ENCODE measurements at regions of chr5 and their contacts with region 1.

Region 1: DNA sequence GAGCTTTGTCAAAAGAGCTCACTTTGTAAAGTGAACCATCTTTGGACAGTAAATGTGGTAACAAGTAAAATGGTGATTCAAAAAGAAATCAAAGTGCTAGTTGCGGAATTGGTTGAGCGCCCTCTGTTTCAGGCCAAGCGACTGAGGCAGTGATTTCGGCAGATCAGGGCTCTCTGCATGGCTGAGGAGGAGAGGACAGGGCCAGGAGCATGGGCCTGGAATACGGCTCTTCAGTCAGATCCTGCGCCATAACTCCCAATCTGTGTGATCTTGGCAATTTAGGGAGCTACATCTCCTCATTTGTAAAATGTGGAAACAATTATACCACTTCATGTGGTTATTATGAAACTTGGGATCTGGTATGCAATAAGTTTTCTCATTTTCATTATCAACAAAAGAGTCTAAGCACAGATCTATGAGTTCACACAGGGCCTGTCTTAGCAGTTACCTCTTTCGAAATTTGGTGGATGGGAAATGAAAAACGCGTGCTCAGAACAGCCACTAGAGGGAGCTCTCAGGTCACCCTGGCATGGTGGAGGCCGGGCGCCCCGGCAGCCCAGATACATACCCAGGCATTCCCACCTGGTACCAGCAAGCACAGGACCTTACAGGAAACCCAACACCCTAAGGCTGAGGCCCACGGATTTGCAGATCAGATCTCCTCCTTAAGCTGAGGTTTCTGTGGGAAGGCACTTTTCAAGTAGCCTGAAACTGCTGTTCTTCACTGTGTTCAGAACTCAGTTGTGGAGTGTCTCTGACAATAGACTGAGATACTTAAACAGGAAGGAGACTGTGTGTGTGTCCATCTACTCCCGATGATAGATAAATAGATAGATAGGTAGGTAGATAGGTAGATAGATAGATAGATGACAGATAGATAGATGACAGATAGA is 303.7 kb downstream of the RAB3C start:
- DNase-seq: peak; percentile 41 to 77 (median 66)
- ATAC-seq: peak; percentile 91
- H3K4me3 ChIP-seq: no peak overlapping the region
- H3K4me3 Mint-ChIP-seq: peak overlapping the region in 7 of 10 donors; percentile 0 to 67 (median 38)
- H3K27ac ChIP-seq: no peak overlapping the region
- H3K27ac Mint-ChIP-seq: peak overlapping the region in 8 of 9 donors; percentile 13 to 85 (median 49)
- H3K4me1 ChIP-seq: peaks cover 0 to 10% of the 10 kb centered on the region in 2 donors
- H3K4me1 Mint-ChIP-seq: peaks cover 19 to 38% (median 27%) of the 10 kb centered on the region in 7 donors
- H3K27me3 ChIP-seq: no peaks in the 10 kb centered on the region
- H3K27me3 Mint-ChIP-seq: peaks cover 0 to 12% (median 0%) of the 10 kb centered on the region in 5 donors

Region 2: DNA sequence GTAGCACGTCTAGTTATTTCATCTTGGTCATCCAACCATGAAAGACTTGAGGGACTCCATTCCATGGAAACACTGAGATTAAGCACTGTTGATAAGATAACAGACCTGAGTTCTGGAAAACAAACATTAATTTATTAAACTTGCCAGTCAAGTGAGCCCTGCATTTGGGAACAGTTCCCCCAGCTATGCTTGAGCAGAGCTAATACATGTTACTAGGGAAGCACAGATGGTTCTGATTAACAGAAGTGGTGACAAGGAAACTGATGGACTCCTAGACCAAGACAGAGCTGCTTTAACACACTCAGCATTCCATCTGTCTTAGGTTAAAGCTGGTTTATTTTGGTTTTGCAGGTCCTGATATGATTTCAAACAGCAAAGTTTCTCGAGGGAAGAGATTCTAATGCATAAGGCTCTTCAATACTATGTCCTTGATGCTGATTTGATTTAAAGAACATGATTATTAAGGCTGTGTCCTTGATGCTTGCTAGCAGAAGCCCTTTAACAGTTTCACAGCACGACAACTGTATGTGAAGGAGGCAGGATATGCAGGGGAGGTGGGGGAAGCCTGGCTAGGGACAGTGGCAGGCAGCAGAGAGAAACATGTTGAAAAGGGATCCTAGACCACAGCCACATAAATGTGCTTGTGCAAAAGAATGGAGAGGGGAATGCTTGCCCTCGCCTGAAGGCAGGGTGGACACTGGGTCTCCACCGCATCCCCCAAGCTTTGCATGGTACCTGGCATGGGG is 1470.1 kb before region 1 on chr5:
- CTCF ChIA-PET with region 1: no interaction called
- POLR2A ChIA-PET with region 1: no interaction called
- intact Hi-C with region 1: no loop called
- DNase-seq: no peak
- ATAC-seq: no peak
- H3K4me3 ChIP-seq: no peak overlapping the region
- H3K4me3 Mint-ChIP-seq: no peak overlapping the region
- H3K27ac ChIP-seq: no peak overlapping the region
- H3K27ac Mint-ChIP-seq: peak overlapping the region in 1 of 9 donors; percentile 26
- H3K4me1 ChIP-seq: no peaks in the 10 kb centered on the region
- H3K4me1 Mint-ChIP-seq: no peaks in the 10 kb centered on the region
- H3K27me3 ChIP-seq: no peaks in the 10 kb centered on the region
- H3K27me3 Mint-ChIP-seq: peaks cover 0 to 7% (median 4%) of the 10 kb centered on the region in 5 donors

Region 3: GRCh38 chr5:58871648-58872242 is 14.8 kb before region 1 on chr5:
- CTCF ChIA-PET with region 1: interaction called, 12 read pairs
- POLR2A ChIA-PET with region 1: no interaction called
- intact Hi-C with region 1: no loop called
- DNase-seq: peak in 4 of 9 donors; percentile 27 to 30 (median 28)
- ATAC-seq: peak; percentile 53
- H3K4me3 ChIP-seq: no peak overlapping the region
- H3K4me3 Mint-ChIP-seq: no peak overlapping the region
- H3K27ac ChIP-seq: no peak overlapping the region
- H3K27ac Mint-ChIP-seq: no peak overlapping the region
- H3K4me1 ChIP-seq: no peaks in the 10 kb centered on the region
- H3K4me1 Mint-ChIP-seq: peaks cover 0 to 1% (median 0%) of the 10 kb centered on the region in 7 donors
- H3K27me3 ChIP-seq: peaks cover 0 to 4% of the 10 kb centered on the region in 2 donors
- H3K27me3 Mint-ChIP-seq: peaks cover 10 to 41% (median 16%) of the 10 kb centered on the region in 5 donors

Region 4: GRCh38 chr5:59086024-59086423 is 199.5 kb after region 1 on chr5:
- CTCF ChIA-PET with region 1: no interaction called
- POLR2A ChIA-PET with region 1: no interaction called
- intact Hi-C with region 1: loop called in 1 of 2 experiments (anchors 5 kb)
- DNase-seq: peak in 1 of 9 donors; percentile 17
- ATAC-seq: no peak
- H3K4me3 ChIP-seq: no peak overlapping the region
- H3K4me3 Mint-ChIP-seq: no peak overlapping the region
- H3K27ac ChIP-seq: no peak overlapping the region
- H3K27ac Mint-ChIP-seq: peak overlapping the region in 2 of 9 donors; percentile 0 to 27
- H3K4me1 ChIP-seq: no peaks in the 10 kb centered on the region
- H3K4me1 Mint-ChIP-seq: peaks cover 0 to 17% (median 0%) of the 10 kb centered on the region in 7 donors
- H3K27me3 ChIP-seq: peaks cover 0 to 3% of the 10 kb centered on the region in 2 donors
- H3K27me3 Mint-ChIP-seq: peaks cover 0 to 33% (median 0%) of the 10 kb centered on the region in 5 donors

Region 5: GRCh38 chr5:59174248-59174844 is 287.8 kb after region 1 on chr5:
- CTCF ChIA-PET with region 1: interaction called, 73 read pairs
- POLR2A ChIA-PET with region 1: interaction called, 3 read pairs
- intact Hi-C with region 1: loop called (anchors 1 kb)
- DNase-seq: peak in 7 of 9 donors; percentile 35 to 67 (median 54)
- ATAC-seq: peak; percentile 86
- H3K4me3 ChIP-seq: no peak overlapping the region
- H3K4me3 Mint-ChIP-seq: no peak overlapping the region
- H3K27ac ChIP-seq: no peak overlapping the region
- H3K27ac Mint-ChIP-seq: peak overlapping the region in 1 of 9 donors; percentile 5
- H3K4me1 ChIP-seq: no peaks in the 10 kb centered on the region
- H3K4me1 Mint-ChIP-seq: peaks cover 0 to 48% (median 5%) of the 10 kb centered on the region in 7 donors
- H3K27me3 ChIP-seq: no peaks in the 10 kb centered on the region
- H3K27me3 Mint-ChIP-seq: no peaks in the 10 kb centered on the region

Region 6: DNA sequence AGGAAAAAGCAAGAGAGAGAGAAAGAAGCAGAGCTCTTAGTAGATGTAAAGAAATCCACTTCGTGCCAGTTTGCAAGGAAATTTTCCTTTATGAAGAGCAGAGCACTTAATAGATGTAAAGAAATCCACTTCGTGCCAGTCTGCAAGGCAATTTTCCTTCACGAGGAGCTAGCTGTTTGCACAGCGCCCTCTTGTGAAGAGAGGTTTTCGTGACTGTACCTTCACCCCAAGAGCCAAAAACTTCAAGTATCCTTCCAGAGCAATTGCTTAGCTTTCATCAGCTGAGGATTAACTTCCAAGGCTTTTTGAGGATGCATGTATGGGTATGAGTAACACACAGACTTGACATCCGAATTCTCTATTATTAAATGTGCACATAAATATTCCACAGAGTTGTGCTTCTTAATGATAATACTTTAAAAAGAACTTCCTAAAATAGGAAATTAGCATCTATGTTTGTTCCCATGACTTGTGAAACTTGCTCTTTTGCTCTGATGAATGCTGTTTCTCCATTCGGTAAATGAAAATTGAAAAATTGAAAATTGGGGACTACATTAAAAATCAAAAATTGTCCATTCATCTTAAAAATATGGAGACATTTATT is 481.3 kb after region 1 on chr5:
- CTCF ChIA-PET with region 1: interaction called, 5 read pairs
- POLR2A ChIA-PET with region 1: no interaction called
- intact Hi-C with region 1: loop called (anchors 1 to 2 kb)
- DNase-seq: peak in 8 of 9 donors; percentile 1 to 47 (median 30)
- ATAC-seq: peak; percentile 60
- H3K4me3 ChIP-seq: no peak overlapping the region
- H3K4me3 Mint-ChIP-seq: peak overlapping the region in 1 of 10 donors; percentile 24
- H3K27ac ChIP-seq: no peak overlapping the region
- H3K27ac Mint-ChIP-seq: no peak overlapping the region
- H3K4me1 ChIP-seq: no peaks in the 10 kb centered on the region
- H3K4me1 Mint-ChIP-seq: peaks cover 0 to 5% (median 0%) of the 10 kb centered on the region in 7 donors
- H3K27me3 ChIP-seq: no peaks in the 10 kb centered on the region
- H3K27me3 Mint-ChIP-seq: peaks cover 0 to 32% (median 4%) of the 10 kb centered on the region in 5 donors

Region 7: DNA sequence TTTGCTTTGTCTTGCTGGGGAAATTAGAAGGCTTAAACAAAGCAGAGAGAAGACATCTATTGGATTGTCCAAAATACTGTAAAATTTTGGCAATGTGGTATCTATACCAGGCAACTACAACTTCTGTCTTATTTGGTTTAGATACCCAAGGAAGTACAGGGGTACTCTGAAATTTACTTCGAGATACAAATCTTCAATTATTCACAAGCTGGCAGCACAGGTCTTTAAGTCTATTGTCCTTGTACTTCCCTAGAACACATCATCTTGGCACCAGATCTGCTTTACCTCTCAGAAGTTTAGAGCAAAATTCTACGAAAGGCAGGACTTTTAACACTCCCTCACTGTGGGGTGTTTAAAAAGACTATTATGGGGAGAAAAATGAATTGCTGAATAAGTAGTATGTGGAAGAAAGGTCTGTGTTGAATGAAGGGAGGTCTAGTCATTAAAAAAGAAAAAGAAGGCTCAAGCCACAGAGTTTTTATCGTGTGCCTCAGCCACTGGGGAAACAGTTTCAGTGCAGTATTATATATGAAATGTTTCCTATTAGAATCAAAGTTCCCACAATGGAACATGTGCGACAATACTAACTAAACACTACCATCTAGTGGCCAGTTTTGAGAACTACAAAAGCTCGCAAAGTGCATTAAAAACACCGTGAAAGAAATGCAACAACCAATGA is 913.2 kb after region 1 on chr5:
- CTCF ChIA-PET with region 1: interaction called, 3 read pairs
- POLR2A ChIA-PET with region 1: no interaction called
- intact Hi-C with region 1: loop called in 1 of 2 experiments (anchors 2 kb)
- DNase-seq: peak in 6 of 9 donors; percentile 4 to 52 (median 41)
- ATAC-seq: peak; percentile 84
- H3K4me3 ChIP-seq: no peak overlapping the region
- H3K4me3 Mint-ChIP-seq: no peak overlapping the region
- H3K27ac ChIP-seq: no peak overlapping the region
- H3K27ac Mint-ChIP-seq: no peak overlapping the region
- H3K4me1 ChIP-seq: peaks cover 0 to 6% of the 10 kb centered on the region in 2 donors
- H3K4me1 Mint-ChIP-seq: no peaks in the 10 kb centered on the region
- H3K27me3 ChIP-seq: no peaks in the 10 kb centered on the region
- H3K27me3 Mint-ChIP-seq: peaks cover 0 to 13% (median 5%) of the 10 kb centered on the region in 5 donors